ENCODE measurements at regions of chr3 and their contacts with region 1.

Region 1: DNA sequence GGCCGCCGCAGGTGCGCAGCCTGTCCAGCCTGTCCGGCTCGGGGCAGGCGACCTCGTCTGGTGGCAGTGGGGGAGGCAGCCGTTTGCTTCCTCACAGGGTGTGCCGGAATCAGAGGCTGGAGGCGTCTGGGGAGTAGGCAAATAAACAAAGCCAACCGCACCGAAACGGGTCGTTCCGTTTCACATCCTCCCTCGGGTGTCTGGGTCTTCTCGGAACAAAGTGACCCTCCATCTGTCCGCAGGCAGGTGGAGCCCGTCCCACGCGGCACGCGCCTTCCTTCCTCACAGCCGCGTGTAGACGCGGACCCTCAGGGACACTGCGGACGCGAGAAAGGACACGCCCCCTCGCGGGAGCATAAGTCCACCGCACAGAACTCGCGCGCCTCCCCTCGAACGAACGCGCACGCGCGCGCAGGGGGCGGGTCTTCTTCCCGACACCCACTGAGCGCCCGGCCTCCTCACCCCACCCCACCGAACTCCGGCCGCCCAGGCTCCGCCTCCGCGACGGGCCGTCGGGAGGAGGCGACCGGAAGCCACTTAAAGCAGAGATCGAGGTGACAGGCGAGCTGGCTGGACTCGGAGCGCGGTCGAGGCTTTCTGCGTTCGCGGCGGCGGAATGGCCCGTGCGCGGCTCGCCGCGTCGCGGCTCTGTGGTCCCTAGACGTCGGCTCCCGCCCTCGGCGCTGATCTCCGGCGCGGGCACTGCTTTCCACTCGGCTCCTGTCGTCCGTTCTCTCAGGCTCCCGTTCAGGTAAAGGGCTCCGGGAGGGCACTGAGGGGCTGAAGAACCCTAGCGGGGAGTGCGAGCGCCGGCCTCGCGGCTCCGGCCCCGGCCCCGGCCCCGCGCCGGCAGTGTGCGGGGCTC is at the start of gene TIPARP:
- DNase-seq: peak; percentile 95 to 100 (median 98)
- ATAC-seq: peak; percentile 93
- H3K4me3 ChIP-seq: peak within 1 kb of the TSS; percentile 93
- H3K4me3 Mint-ChIP-seq: peak within 1 kb of the TSS; percentile 94 to 98 (median 97)
- H3K27ac ChIP-seq: peak within 1 kb of the TSS; percentile 85
- H3K27ac Mint-ChIP-seq: peak within 1 kb of the TSS; percentile 94 to 99 (median 97)
- H3K4me1 ChIP-seq: peaks cover 25 to 28% of the 10 kb centered on the region in 2 donors
- H3K4me1 Mint-ChIP-seq: peaks cover 34 to 44% (median 39%) of the 10 kb centered on the region in 7 donors
- H3K27me3 ChIP-seq: no peaks in the 10 kb centered on the region
- H3K27me3 Mint-ChIP-seq: no peaks in the 10 kb centered on the region
- total RNA-seq, gene TIPARP: 59.2 to 66.6 (median 64.3) TPM

Region 2: DNA sequence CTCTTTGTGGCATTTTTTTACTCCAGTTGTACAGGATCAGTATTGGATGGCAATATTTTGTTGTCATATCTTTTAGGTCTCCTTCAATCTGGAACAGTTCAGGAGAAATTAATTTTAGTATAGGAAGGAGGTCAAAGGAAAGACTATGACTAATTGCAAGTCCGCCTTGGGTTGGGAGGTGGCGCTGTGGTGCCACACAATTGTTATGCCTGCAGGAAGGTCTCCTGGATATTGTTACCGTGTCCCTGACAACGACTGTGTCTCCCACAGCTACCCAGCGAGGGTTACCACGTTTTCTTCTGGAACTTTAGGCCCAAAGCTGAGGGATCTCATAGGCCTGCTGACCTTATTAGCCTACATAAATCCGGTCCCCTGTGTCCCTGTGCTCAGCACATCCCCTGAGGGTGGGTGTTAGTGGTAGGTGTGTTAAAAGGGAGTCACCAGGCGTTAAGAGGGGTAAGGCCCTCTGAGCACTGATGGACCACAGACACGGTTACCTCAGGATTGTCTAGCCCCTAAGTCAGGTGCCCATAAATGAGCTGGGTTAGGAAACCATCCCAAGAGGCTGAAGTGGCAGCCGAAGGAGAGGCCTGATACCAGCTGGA is 522.4 kb before region 1 on chr3:
- CTCF ChIA-PET with region 1: no interaction called
- POLR2A ChIA-PET with region 1: no interaction called
- intact Hi-C with region 1: loop called in 1 of 2 experiments (anchors 1 kb)
- DNase-seq: peak in 7 of 9 donors; percentile 18 to 40 (median 27)
- ATAC-seq: peak; percentile 58
- H3K4me3 ChIP-seq: no peak overlapping the region
- H3K4me3 Mint-ChIP-seq: no peak overlapping the region
- H3K27ac ChIP-seq: no peak overlapping the region
- H3K27ac Mint-ChIP-seq: no peak overlapping the region
- H3K4me1 ChIP-seq: no peaks in the 10 kb centered on the region
- H3K4me1 Mint-ChIP-seq: peaks cover 0 to 7% (median 0%) of the 10 kb centered on the region in 7 donors
- H3K27me3 ChIP-seq: no peaks in the 10 kb centered on the region
- H3K27me3 Mint-ChIP-seq: peaks cover 0 to 18% (median 0%) of the 10 kb centered on the region in 5 donors

Region 3: GRCh38 chr3:156594219-156594683 is 80.0 kb before region 1 on chr3:
- CTCF ChIA-PET with region 1: no interaction called
- POLR2A ChIA-PET with region 1: no interaction called
- intact Hi-C with region 1: no loop called
- DNase-seq: no peak
- ATAC-seq: no peak
- H3K4me3 ChIP-seq: no peak overlapping the region
- H3K4me3 Mint-ChIP-seq: no peak overlapping the region
- H3K27ac ChIP-seq: no peak overlapping the region
- H3K27ac Mint-ChIP-seq: no peak overlapping the region
- H3K4me1 ChIP-seq: no peaks in the 10 kb centered on the region
- H3K4me1 Mint-ChIP-seq: peaks cover 0 to 12% (median 0%) of the 10 kb centered on the region in 7 donors
- H3K27me3 ChIP-seq: peaks cover 0 to 3% of the 10 kb centered on the region in 2 donors
- H3K27me3 Mint-ChIP-seq: peaks cover 8 to 39% (median 13%) of the 10 kb centered on the region in 5 donors

Region 4: DNA sequence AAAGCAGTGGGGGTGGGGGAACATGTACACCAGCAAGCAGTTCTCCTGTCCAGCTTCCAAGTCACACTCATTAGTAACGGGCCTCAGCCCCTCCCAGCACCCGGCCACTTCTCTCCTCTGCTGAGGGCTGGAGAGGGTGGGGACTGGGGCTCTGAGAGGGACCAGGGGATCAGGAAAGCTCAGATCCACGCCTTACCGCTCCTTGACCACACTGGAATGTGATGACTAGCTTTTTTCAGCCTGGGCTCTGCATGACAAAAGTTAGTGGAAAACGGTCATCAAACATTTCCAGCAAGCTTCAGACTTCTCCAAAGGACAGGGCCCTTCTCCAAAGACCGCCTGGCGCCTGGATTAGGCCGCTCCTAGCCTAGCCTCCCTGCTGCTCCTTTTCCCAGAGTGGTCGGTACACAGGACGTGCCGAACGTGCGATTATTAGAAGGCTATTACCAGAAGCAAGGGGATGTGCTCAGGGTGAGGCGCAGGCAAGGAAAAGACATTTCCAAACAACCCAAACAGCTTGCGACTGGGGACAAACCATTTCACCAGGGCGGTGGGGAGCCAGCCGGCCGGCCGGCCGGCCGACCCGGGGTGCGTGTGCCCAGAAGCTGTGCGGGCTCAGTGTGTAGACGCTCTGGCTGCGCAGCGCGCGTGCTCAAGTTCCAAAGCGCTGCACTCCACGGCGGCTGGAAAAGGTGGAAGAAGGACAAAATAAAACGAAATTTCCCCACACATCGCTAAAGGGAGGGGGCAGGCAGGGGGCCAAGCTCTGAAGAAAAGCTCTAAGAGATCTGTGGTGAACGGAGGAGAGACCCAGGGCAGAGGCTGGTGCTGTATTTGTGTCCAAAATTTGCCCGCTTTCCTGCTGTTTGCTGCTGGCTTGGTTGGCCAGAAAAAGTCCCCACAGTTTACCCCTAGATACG is 68.3 kb before region 1 on chr3:
- CTCF ChIA-PET with region 1: interaction called, 3 read pairs
- POLR2A ChIA-PET with region 1: no interaction called
- intact Hi-C with region 1: loop called (anchors 2 to 5 kb)
- DNase-seq: no peak
- ATAC-seq: peak; percentile 51
- H3K4me3 ChIP-seq: peak overlapping the region; percentile 17
- H3K4me3 Mint-ChIP-seq: peak overlapping the region; percentile 18 to 88 (median 68)
- H3K27ac ChIP-seq: no peak overlapping the region
- H3K27ac Mint-ChIP-seq: peak overlapping the region in 1 of 9 donors; percentile 74
- H3K4me1 ChIP-seq: peaks cover 0 to 5% of the 10 kb centered on the region in 2 donors
- H3K4me1 Mint-ChIP-seq: peaks cover 5 to 45% (median 10%) of the 10 kb centered on the region in 7 donors
- H3K27me3 ChIP-seq: no peaks in the 10 kb centered on the region
- H3K27me3 Mint-ChIP-seq: peaks cover 25 to 32% (median 27%) of the 10 kb centered on the region in 5 donors

Region 5: DNA sequence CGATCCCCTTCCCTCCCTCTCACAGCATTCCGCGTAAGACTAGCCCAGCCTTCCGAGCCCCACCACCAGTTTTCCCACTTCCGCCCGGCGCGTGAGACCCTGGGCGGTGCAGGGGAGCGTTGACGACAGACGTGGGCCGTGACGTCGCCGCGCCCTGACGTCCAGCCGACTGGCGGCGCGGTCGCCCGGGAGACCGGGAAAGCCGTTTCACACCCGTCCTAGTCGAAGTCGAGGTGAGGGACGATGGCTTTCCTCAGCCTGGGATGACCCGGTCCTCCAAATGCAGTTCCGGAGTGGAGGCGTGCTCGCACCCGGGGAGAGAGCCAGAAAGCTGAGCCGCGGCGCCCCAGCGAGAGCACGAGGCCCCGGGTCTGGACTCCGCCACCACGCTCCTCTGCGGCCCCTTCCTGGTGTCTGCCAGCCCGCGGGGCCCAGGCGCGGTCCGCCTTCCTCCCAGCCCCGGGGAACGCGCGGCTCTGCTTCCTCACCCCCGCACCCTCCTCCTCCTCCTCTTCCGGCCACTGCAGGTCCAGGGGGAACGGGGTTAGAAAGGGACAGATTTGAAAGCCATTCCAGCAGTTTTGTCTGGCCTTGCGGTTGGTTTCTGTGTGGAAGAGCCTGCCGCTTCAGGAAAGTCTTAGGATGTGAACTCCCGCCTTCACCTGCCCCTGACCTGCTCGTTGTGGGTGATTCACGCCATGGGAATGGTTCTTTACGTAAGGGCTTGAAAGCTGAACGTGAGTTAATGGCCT is 152.0 kb after region 1 on chr3 and contains the start of gene LEKR1:
- CTCF ChIA-PET with region 1: no interaction called
- POLR2A ChIA-PET with region 1: interaction called, 3 read pairs
- intact Hi-C with region 1: loop called in 1 of 2 experiments (anchors 1 kb)
- DNase-seq: peak; percentile 38 to 73 (median 59)
- ATAC-seq: peak; percentile 84
- H3K4me3 ChIP-seq: peak within 1 kb of the TSS; percentile 73
- H3K4me3 Mint-ChIP-seq: peak within 1 kb of the TSS; percentile 85 to 98 (median 96)
- H3K27ac ChIP-seq: peak within 1 kb of the TSS; percentile 80
- H3K27ac Mint-ChIP-seq: peak within 1 kb of the TSS; percentile 91 to 99 (median 97)
- H3K4me1 ChIP-seq: no peaks in the 10 kb centered on the region
- H3K4me1 Mint-ChIP-seq: peaks cover 7 to 43% (median 19%) of the 10 kb centered on the region in 7 donors
- H3K27me3 ChIP-seq: no peaks in the 10 kb centered on the region
- H3K27me3 Mint-ChIP-seq: peaks cover 0 to 6% (median 0%) of the 10 kb centered on the region in 5 donors
- total RNA-seq, gene LEKR1: 0.31 to 5.1 (median 1.2) TPM

Region 6: DNA sequence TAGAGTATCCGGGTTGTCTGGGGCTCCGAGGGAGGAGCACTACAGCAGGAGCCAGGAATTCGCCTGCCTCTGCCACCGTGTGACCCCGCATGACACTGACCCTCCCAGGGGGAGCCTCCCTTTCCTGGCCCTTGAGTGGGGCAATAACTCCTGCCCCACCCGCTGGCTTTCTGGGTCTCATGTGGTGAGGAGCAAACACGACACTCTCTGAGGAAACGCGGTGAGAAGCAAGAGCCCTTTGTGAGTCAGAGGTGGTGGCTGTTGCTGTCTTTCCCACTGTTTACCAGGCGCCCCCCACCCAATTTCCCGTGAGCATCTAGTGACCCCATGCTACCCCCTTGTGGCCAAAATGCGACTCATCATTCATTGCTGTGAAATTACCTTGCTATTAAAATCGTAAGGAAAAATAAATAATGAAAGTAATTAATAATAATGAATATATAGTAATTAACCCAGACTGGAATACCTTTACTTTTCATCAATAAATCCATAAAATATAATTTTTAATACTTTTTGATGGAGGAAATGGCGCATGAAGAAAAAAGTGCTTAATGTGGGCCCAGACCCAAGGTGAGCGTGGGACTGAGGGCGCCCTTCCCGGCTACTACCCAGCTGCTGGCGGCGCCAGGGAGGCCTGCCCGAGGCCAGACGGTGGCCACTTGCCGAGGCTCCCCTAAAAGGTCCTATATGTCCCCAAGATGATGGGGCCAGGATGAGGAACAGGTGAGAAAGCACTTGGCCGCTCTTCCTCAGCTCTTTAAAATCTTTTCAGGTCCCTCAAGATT is 456.4 kb after region 1 on chr3:
- CTCF ChIA-PET with region 1: interaction called, 3 read pairs
- POLR2A ChIA-PET with region 1: interaction called, 13 read pairs
- intact Hi-C with region 1: loop called (anchors 1 kb)
- DNase-seq: peak; percentile 43 to 86 (median 80)
- ATAC-seq: peak; percentile 78
- H3K4me3 ChIP-seq: peak overlapping the region; percentile 35
- H3K4me3 Mint-ChIP-seq: peak overlapping the region; percentile 61 to 84 (median 74)
- H3K27ac ChIP-seq: peak overlapping the region; percentile 80
- H3K27ac Mint-ChIP-seq: peak overlapping the region; percentile 93 to 99 (median 97)
- H3K4me1 ChIP-seq: peaks cover 44 to 69% of the 10 kb centered on the region in 2 donors
- H3K4me1 Mint-ChIP-seq: peaks cover 34 to 89% (median 60%) of the 10 kb centered on the region in 7 donors
- H3K27me3 ChIP-seq: no peaks in the 10 kb centered on the region
- H3K27me3 Mint-ChIP-seq: no peaks in the 10 kb centered on the region

Region 7: GRCh38 chr3:157239082-157239704 is 564.9 kb after region 1 on chr3:
- CTCF ChIA-PET with region 1: no interaction called
- POLR2A ChIA-PET with region 1: no interaction called
- intact Hi-C with region 1: loop called in 1 of 2 experiments (anchors 1 kb)
- DNase-seq: peak; percentile 42 to 72 (median 58)
- ATAC-seq: peak; percentile 100
- H3K4me3 ChIP-seq: no peak overlapping the region
- H3K4me3 Mint-ChIP-seq: no peak overlapping the region
- H3K27ac ChIP-seq: no peak overlapping the region
- H3K27ac Mint-ChIP-seq: no peak overlapping the region
- H3K4me1 ChIP-seq: no peaks in the 10 kb centered on the region
- H3K4me1 Mint-ChIP-seq: peaks cover 0 to 6% (median 4%) of the 10 kb centered on the region in 7 donors
- H3K27me3 ChIP-seq: no peaks in the 10 kb centered on the region
- H3K27me3 Mint-ChIP-seq: peaks cover 0 to 8% (median 0%) of the 10 kb centered on the region in 5 donors